ENCODE measurements at regions of chr3 and their contacts with region 1.

Region 1: GRCh38 chr3:159804726-159805410 is 183.8 kb upstream of the IL12A start:
- DNase-seq: peak; percentile 49 to 61
- H3K4me3 ChIP-seq: no peak overlapping the region
- H3K27ac ChIP-seq: no peak overlapping the region
- H3K4me1 ChIP-seq: peaks cover 0 to 3% (median 1%) of the 10 kb centered on the region in 4 experiments; a peak in 1 of 7 replicates
- H3K27me3 ChIP-seq: peaks cover 3 to 18% (median 11%) of the 10 kb centered on the region in 4 experiments; a peak in 6 of 7 replicates
- CTCF ChIP-seq: peak; percentile 70 to 95 (median 91)
- EP300 ChIP-seq: no peak
- POLR2A ChIP-seq: no peak
- RAD21 ChIP-seq: peak; percentile 99

Region 2: GRCh38 chr3:159486586-159486985 is 318.3 kb before region 1 on chr3:
- CTCF ChIA-PET with region 1: interaction called, 11 read pairs
- POLR2A ChIA-PET with region 1: no interaction called
- DNase-seq: peak; percentile 17 to 52
- H3K4me3 ChIP-seq: no peak overlapping the region
- H3K27ac ChIP-seq: no peak overlapping the region
- H3K4me1 ChIP-seq: no peaks in the 10 kb centered on the region
- H3K27me3 ChIP-seq: peaks cover 0 to 1% (median 0%) of the 10 kb centered on the region in 4 experiments; a peak in 1 of 7 replicates
- CTCF ChIP-seq: peak; percentile 52 to 91 (median 82)
- EP300 ChIP-seq: 0 out of 3 replicates have a peak, but pooled peaks of 1 of the 2 experiments have one; percentile 54
- POLR2A ChIP-seq: no peak
- RAD21 ChIP-seq: peak; percentile 67 to 70

Region 3: DNA sequence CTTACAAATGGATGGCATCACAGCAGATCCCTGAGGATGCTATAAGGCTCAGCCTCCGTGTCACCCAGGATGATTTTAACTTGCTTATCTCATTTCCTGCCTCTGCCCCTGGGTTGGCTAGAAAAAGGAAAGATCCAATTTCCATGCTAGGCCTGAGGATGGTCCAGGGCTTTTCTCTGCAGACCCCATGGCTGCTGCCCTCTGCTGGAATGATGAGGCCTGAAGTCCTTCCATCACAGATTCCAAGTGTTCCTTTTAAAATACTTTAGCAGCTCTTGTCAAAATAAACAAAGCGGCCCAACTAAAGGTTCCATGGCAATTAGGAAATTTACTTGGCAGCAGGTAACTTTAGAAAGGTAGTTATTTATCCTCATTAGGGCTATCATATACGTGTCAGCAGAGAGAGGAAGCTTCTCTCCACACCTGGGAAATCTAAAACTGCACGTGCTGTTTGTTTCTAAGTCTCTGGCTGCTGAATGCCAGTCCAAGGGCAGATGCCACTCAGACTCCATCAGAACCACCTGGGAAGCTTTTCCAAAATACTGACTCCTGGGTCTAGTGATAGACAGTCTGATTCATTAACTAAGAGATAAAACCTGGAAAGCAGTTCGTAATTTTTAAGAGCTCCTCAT is 218.2 kb before region 1 on chr3:
- CTCF ChIA-PET with region 1: interaction called, 12 read pairs
- POLR2A ChIA-PET with region 1: no interaction called
- DNase-seq: peak; percentile 41 to 68
- H3K4me3 ChIP-seq: no peak overlapping the region
- H3K27ac ChIP-seq: no peak overlapping the region
- H3K4me1 ChIP-seq: peaks cover 0 to 6% (median 3%) of the 10 kb centered on the region in 4 experiments; a peak in 3 of 7 replicates
- H3K27me3 ChIP-seq: no peaks in the 10 kb centered on the region
- CTCF ChIP-seq: peak; percentile 71 to 84 (median 81)
- EP300 ChIP-seq: no peak
- POLR2A ChIP-seq: no peak
- RAD21 ChIP-seq: peak; percentile 84

Region 4: GRCh38 chr3:159763602-159764489 is 41.0 kb before region 1 on chr3:
- CTCF ChIA-PET with region 1: interaction called, 46 read pairs
- POLR2A ChIA-PET with region 1: no interaction called
- DNase-seq: peak; percentile 69 to 87
- H3K4me3 ChIP-seq: peak overlapping the region; percentile 65 to 87 (median 78)
- H3K27ac ChIP-seq: peak overlapping the region; percentile 54
- H3K4me1 ChIP-seq: peaks cover 5 to 19% (median 6%) of the 10 kb centered on the region in 4 experiments; a peak in 6 of 7 replicates
- H3K27me3 ChIP-seq: peaks cover 0 to 2% (median 0%) of the 10 kb centered on the region in 4 experiments; a peak in 2 of 7 replicates
- CTCF ChIP-seq: peak in 2 of 3 experiments; percentile 24 to 29; a peak in 3 of 4 replicates
- EP300 ChIP-seq: no peak
- POLR2A ChIP-seq: peak; percentile 14 to 78; a peak in 2 of 3 replicates
- RAD21 ChIP-seq: no peak; a peak in 1 of 4 replicates

Region 5: GRCh38 chr3:159783777-159784743 is 20.8 kb before region 1 on chr3:
- CTCF ChIA-PET with region 1: interaction called, 96 read pairs
- POLR2A ChIA-PET with region 1: interaction called, 3 read pairs
- DNase-seq: no peak
- H3K4me3 ChIP-seq: no peak overlapping the region
- H3K27ac ChIP-seq: no peak overlapping the region
- H3K4me1 ChIP-seq: peaks cover 0 to 7% (median 0%) of the 10 kb centered on the region in 4 experiments; a peak in 6 of 7 replicates
- H3K27me3 ChIP-seq: no peaks in the 10 kb centered on the region
- CTCF ChIP-seq: no peak
- EP300 ChIP-seq: no peak
- POLR2A ChIP-seq: no peak
- RAD21 ChIP-seq: no peak